GM10248 (cell line): ENCODE measurements at regions of chr3 and their contacts with region 1.

Region 1: GRCh38 chr3:140724856-140725812 is 47.3 kb downstream of the TRIM42 start:
- DNase-seq: peak; percentile 31
- CTCF ChIP-seq: no peak

Region 2: DNA sequence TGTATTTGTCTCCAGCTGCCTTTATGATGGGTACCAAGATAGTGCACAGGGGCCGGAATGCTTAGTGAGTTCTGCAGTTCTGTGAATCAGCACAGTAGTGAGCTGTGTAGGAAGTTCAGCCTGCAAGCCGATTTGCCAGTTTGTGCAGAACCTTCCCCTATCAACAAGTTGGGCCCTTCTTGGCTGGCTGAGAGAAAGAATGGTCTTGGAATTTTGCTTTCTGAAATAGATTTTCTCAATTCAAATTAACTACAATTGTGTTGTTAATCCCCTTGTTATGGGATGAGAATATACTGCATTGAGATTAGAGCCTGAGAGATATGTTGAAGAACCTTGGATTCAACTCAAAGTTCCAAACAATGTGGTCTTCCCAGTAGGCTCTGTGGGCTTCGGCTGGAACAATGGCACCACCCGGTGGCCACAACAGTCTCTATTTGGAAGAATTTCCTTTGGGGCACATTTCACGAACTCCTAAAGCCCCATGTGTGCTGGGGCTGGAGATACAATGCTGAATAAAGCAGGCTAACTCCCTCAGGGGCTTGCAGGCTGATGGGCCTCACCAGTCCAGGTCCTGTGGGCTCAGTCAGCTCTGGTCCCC is 11.8 kb after region 1 on chr3:
- CTCF ChIA-PET with region 1: interaction called, 17 read pairs
- POLR2A ChIA-PET with region 1: no interaction called
- DNase-seq: peak; percentile 34
- CTCF ChIP-seq: peak; percentile 48

Region 3: DNA sequence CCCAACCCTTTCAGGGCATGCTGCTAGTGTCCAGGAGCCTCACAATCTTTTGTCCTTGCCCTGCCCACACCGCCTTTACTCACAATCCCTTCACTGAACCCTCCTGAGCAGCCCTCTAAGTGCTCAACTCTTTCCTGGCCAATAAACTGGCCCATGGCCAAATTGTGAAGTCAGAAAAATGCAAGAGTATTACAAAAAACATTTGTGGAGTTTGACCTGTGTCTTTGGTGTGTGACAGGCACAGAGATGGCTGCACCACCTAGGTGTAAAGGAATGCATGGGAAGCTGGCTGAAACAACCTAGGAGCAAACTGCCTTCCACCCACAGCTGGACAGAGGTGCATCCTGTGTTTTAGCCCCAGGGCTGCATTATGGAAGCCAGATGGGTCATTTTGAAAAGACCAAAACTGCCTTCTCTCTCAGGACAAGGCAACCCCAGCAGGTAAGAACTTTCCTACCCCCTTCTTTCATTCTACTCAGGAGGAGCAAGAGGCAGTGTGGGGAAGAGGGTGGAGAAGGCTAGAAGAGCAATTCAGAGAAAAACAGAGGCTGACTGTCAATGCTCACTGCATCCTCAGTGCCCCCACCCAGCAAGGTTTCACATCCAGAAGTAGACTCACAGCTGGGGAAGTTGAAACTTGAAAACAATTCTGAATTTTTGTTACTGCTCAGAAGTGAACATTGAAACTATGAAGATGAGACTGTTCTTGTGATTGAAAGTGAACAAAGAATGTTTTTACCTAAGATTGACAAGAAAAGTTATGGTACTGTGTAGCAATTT is 31.3 kb after region 1 on chr3:
- CTCF ChIA-PET with region 1: no interaction called
- POLR2A ChIA-PET with region 1: no interaction called
- DNase-seq: peak; percentile 43
- CTCF ChIP-seq: no peak